PC-9 (cell line): ENCODE measurements at regions of chr17 and their contacts with region 1.

Region 1: GRCh38 chr17:21457051-21458026 is 81.2 kb downstream of the KCNJ12 start:
- DNase-seq: peak; percentile 94 to 99
- H3K4me3 ChIP-seq: no peak overlapping the region; the same call in 1 of the 2 replicates
- H3K27ac ChIP-seq: no peak overlapping the region
- H3K4me1 ChIP-seq: peaks cover 10% of the 10 kb centered on the region
- H3K27me3 ChIP-seq: peaks cover 14% of the 10 kb centered on the region; the same call in 1 of the 2 replicates
- CTCF ChIP-seq: peak; percentile 93

Region 2: DNA sequence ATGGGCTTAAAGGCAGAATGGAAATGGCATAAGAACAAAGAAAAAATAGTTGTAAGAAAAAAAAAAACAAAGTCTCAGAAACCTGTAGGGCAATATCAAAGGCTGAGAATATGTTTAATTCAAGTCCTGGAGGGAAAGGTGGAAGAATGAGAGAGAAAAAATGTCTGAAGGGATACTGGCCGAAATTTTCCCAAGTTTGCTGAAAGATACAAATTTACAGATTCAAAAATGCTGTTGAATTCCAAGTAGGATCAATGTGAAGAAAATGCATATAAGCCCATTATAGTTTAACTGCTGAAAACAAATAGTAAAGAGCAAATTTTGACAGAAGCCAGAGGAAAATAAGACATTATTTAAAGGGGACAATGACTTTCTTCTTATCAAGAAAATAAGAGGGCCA is 407.9 kb before region 1 on chr17:
- CTCF ChIA-PET with region 1: no interaction called
- POLR2A ChIA-PET with region 1: interaction called, 20 read pairs
- intact Hi-C with region 1: no loop called
- DNase-seq: no peak
- H3K4me3 ChIP-seq: no peak overlapping the region
- H3K27ac ChIP-seq: no peak overlapping the region
- H3K4me1 ChIP-seq: peaks cover 11% of the 10 kb centered on the region; the same call in 1 of the 2 replicates
- H3K27me3 ChIP-seq: no peaks in the 10 kb centered on the region
- CTCF ChIP-seq: no peak

Region 3: DNA sequence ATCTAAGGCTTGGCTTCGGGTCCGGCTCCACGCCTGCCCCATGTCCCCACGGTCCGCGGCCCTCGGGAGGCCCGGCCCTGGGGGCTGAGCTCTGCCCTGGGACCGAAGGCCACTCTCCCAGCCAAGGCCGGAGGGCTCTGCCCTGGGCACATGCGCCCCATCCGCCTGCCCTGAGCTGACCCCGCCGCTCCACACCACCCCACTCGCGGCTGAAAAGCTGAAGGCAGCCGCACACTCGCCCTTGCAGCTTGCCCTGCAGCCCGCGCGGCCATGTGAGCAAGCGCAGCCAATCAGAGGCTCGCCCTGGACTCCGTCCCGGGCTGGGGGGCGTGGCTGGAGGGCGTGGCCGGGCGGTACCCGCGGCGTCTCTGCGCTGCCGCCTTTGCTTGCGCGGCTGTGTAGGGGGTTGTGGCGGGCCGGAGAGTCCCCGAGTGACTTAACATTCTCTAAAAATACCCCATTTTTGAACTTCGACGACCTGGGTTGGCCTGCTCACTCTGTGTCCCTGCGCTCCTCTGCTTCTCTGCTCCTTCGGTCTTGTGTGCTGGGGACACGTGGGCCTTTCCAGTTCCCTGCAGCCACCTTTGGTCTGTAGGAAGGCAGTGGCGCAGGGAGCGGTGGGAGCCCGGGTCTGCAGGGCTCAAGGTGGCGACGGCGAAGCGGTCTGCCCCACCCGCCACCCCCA is 181.6 kb before region 1 on chr17:
- CTCF ChIA-PET with region 1: no interaction called
- POLR2A ChIA-PET with region 1: no interaction called
- intact Hi-C with region 1: loop called (anchors 2 kb)
- DNase-seq: peak; percentile 62 to 91
- H3K4me3 ChIP-seq: peak overlapping the region; percentile 70
- H3K27ac ChIP-seq: no peak overlapping the region
- H3K4me1 ChIP-seq: peaks cover 4% of the 10 kb centered on the region; the same call in 1 of the 2 replicates
- H3K27me3 ChIP-seq: no peaks in the 10 kb centered on the region
- CTCF ChIP-seq: no peak

Region 4: GRCh38 chr17:21318439-21318838 is 138.9 kb before region 1 on chr17:
- CTCF ChIA-PET with region 1: no interaction called
- POLR2A ChIA-PET with region 1: no interaction called
- intact Hi-C with region 1: loop called (anchors 5 kb)
- DNase-seq: no peak
- H3K4me3 ChIP-seq: no peak overlapping the region
- H3K27ac ChIP-seq: no peak overlapping the region
- H3K4me1 ChIP-seq: no peaks in the 10 kb centered on the region
- H3K27me3 ChIP-seq: no peaks in the 10 kb centered on the region
- CTCF ChIP-seq: no peak

Region 5: DNA sequence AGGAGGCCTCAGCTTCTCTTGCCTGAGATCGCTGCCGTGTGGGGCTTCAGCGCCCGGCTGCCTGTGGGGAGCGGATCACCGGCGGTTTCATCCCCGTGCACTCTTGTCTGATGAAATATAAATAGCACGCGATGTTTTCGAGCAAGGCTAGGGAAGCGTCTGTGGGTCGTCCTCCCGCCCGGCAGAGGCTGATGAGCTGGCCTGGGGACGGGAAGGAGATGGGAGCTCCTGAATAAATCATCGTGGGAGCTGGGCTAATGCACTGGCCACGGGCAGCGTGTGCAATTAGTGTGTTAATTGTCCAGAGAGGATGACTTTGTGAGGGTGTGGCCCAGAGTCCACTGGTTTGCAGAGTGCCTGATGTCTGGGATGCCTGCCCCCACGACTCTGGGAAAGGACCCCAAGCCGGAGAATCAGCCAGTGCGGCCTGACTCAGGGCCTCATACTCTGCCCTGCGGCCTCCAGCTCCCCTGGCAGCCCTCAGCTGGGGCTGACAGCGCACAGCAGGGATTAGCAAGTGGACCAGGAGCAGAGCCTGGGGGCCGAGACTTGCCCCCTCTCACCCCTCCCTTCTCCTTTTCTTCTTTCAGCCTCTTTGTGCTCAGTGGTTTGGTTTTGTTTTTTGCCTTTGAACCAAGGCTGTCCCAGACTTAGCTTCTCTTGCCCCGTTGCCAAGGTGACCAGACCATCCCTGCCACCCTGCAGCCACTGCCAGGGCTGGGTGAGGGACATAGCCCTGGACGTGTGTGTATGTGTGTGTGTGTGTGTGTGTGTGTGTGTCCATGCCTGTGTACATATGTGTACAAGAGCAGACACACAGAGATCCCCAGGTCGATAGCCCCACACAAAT is 59.8 kb before region 1 on chr17:
- CTCF ChIA-PET with region 1: interaction called, 10 read pairs
- POLR2A ChIA-PET with region 1: no interaction called
- intact Hi-C with region 1: loop called (anchors 5 kb)
- DNase-seq: no peak
- H3K4me3 ChIP-seq: no peak overlapping the region
- H3K27ac ChIP-seq: no peak overlapping the region
- H3K4me1 ChIP-seq: peaks cover 19% of the 10 kb centered on the region
- H3K27me3 ChIP-seq: no peaks in the 10 kb centered on the region
- CTCF ChIP-seq: no peak

Region 6: GRCh38 chr17:21511363-21512198 is 54.2 kb after region 1 on chr17:
- CTCF ChIA-PET with region 1: interaction called, 10 read pairs
- POLR2A ChIA-PET with region 1: interaction called, 23 read pairs
- intact Hi-C with region 1: loop called (anchors 1 kb)
- DNase-seq: peak; percentile 38 to 67
- H3K4me3 ChIP-seq: no peak overlapping the region
- H3K27ac ChIP-seq: no peak overlapping the region
- H3K4me1 ChIP-seq: 0 out of 2 replicates have a peak, but pooled peaks cover 3% of the 10 kb centered on the region
- H3K27me3 ChIP-seq: peaks cover 25% of the 10 kb centered on the region
- CTCF ChIP-seq: peak; percentile 75

Region 7: GRCh38 chr17:21524211-21524591 is 66.9 kb after region 1 on chr17:
- CTCF ChIA-PET with region 1: interaction called, 14 read pairs
- POLR2A ChIA-PET with region 1: no interaction called
- intact Hi-C with region 1: no loop called
- DNase-seq: no peak
- H3K4me3 ChIP-seq: no peak overlapping the region
- H3K27ac ChIP-seq: no peak overlapping the region
- H3K4me1 ChIP-seq: no peaks in the 10 kb centered on the region
- H3K27me3 ChIP-seq: no peaks in the 10 kb centered on the region; the same call in 1 of the 2 replicates
- CTCF ChIP-seq: no peak